Right lobe of liver (tissue), 6 donors: ENCODE measurements at regions of chr5 and their contacts with region 1.

Region 1: GRCh38 chr5:139689631-139690063 is 41.5 kb downstream of the CXXC5 start:
- DNase-seq: no peak
- ATAC-seq: peak in 3 of 4 donors; percentile 1 to 4 (median 2)
- H3K4me3 ChIP-seq: no peak overlapping the region
- H3K27ac ChIP-seq: no peak overlapping the region
- H3K4me1 ChIP-seq: peaks cover 0 to 50% (median 24%) of the 10 kb centered on the region in 4 donors
- H3K27me3 ChIP-seq: no peaks in the 10 kb centered on the region
- CTCF ChIP-seq: no peak
- POLR2A ChIP-seq: no peak

Region 2: GRCh38 chr5:139633295-139634027 is 56.2 kb before region 1 on chr5:
- intact Hi-C with region 1: loop called in 1 of 2 experiments (anchors 5 kb)
- DNase-seq: peak; percentile 69 to 72 (median 72)
- ATAC-seq: peak; percentile 46 to 65 (median 52)
- H3K4me3 ChIP-seq: no peak overlapping the region
- H3K27ac ChIP-seq: no peak overlapping the region
- H3K4me1 ChIP-seq: peaks cover 8 to 33% (median 14%) of the 10 kb centered on the region in 4 donors
- H3K27me3 ChIP-seq: no peaks in the 10 kb centered on the region
- CTCF ChIP-seq: peak; percentile 94 to 98 (median 98)
- POLR2A ChIP-seq: no peak

Region 3: GRCh38 chr5:139639578-139640301 is 49.9 kb before region 1 on chr5:
- intact Hi-C with region 1: loop called (anchors 5 kb)
- DNase-seq: peak; percentile 72 to 76 (median 72)
- ATAC-seq: no peak
- H3K4me3 ChIP-seq: no peak overlapping the region
- H3K27ac ChIP-seq: peak overlapping the region; percentile 9 to 95 (median 94)
- H3K4me1 ChIP-seq: peaks cover 8 to 73% (median 43%) of the 10 kb centered on the region in 4 donors
- H3K27me3 ChIP-seq: no peaks in the 10 kb centered on the region
- CTCF ChIP-seq: no peak
- POLR2A ChIP-seq: no peak